B cell (primary cell): ENCODE measurements at regions of chr13 and their contacts with region 1.

Region 1: GRCh38 chr13:30408319-30409101 is 13.8 kb upstream of the UBE2L5 start:
- DNase-seq: peak; percentile 94
- ATAC-seq: peak; percentile 97
- H3K4me3 ChIP-seq: peak overlapping the region; percentile 14 to 53 (median 48)
- H3K4me3 Mint-ChIP-seq: peak overlapping the region; percentile 73
- H3K27ac ChIP-seq: peak overlapping the region; percentile 56 to 67
- H3K27ac Mint-ChIP-seq: peak overlapping the region; percentile 85
- H3K4me1 ChIP-seq: peaks cover 25 to 40% of the 10 kb centered on the region in 2 donors
- H3K4me1 Mint-ChIP-seq: peaks cover 49% of the 10 kb centered on the region
- H3K27me3 ChIP-seq: no peaks in the 10 kb centered on the region
- H3K27me3 Mint-ChIP-seq: no peaks in the 10 kb centered on the region
- CTCF ChIP-seq: peak; percentile 72

Region 2: GRCh38 chr13:30061217-30061616 is 347.3 kb before region 1 on chr13:
- CTCF ChIA-PET with region 1: no interaction called
- POLR2A ChIA-PET with region 1: no interaction called
- intact Hi-C with region 1: no loop called
- DNase-seq: no peak
- ATAC-seq: no peak
- H3K4me3 ChIP-seq: no peak overlapping the region
- H3K4me3 Mint-ChIP-seq: no peak overlapping the region
- H3K27ac ChIP-seq: no peak overlapping the region
- H3K27ac Mint-ChIP-seq: no peak overlapping the region
- H3K4me1 ChIP-seq: no peaks in the 10 kb centered on the region
- H3K4me1 Mint-ChIP-seq: no peaks in the 10 kb centered on the region
- H3K27me3 ChIP-seq: peaks cover 0 to 4% (median 0%) of the 10 kb centered on the region in 4 experiments
- H3K27me3 Mint-ChIP-seq: peaks cover 27% of the 10 kb centered on the region
- CTCF ChIP-seq: no peak

Region 3: GRCh38 chr13:30306762-30307193 is 101.7 kb before region 1 on chr13:
- CTCF ChIA-PET with region 1: interaction called, 3 read pairs
- POLR2A ChIA-PET with region 1: interaction called, 3 read pairs
- intact Hi-C with region 1: loop called (anchors 1 kb)
- DNase-seq: peak; percentile 96
- ATAC-seq: peak; percentile 89
- H3K4me3 ChIP-seq: peak overlapping the region; percentile 70 to 97 (median 83)
- H3K4me3 Mint-ChIP-seq: peak overlapping the region; percentile 85
- H3K27ac ChIP-seq: peak overlapping the region; percentile 71 to 87
- H3K27ac Mint-ChIP-seq: peak overlapping the region; percentile 86
- H3K4me1 ChIP-seq: peaks cover 28 to 45% of the 10 kb centered on the region in 2 donors
- H3K4me1 Mint-ChIP-seq: peaks cover 55% of the 10 kb centered on the region
- H3K27me3 ChIP-seq: no peaks in the 10 kb centered on the region
- H3K27me3 Mint-ChIP-seq: no peaks in the 10 kb centered on the region
- CTCF ChIP-seq: no peak

Region 4: DNA sequence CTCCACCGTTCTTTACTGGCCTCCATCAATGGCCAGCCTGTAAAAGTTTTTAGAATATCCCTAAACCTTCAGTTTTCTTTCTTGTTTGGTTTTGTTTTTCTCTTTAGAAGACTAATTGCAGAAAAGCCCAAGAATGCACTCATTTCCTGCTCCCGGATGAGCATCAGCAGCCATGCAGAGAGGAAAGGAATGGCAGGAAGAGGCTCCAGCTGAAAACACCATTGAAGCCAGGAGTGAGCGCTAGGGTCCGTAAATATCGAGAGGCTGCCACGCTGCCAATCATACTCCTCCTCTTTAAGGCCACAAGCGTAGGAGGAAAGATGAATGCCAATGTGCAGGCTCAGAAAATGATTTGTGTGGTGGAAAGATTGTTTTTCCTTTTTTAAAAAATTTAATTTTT is 43.6 kb before region 1 on chr13:
- CTCF ChIA-PET with region 1: interaction called, 93 read pairs
- POLR2A ChIA-PET with region 1: interaction called, 4 read pairs
- intact Hi-C with region 1: no loop called
- DNase-seq: no peak
- ATAC-seq: no peak
- H3K4me3 ChIP-seq: no peak overlapping the region
- H3K4me3 Mint-ChIP-seq: no peak overlapping the region
- H3K27ac ChIP-seq: no peak overlapping the region
- H3K27ac Mint-ChIP-seq: no peak overlapping the region
- H3K4me1 ChIP-seq: peaks cover 34 to 40% of the 10 kb centered on the region in 2 donors
- H3K4me1 Mint-ChIP-seq: peaks cover 39% of the 10 kb centered on the region
- H3K27me3 ChIP-seq: no peaks in the 10 kb centered on the region
- H3K27me3 Mint-ChIP-seq: no peaks in the 10 kb centered on the region
- CTCF ChIP-seq: no peak

Region 5: GRCh38 chr13:30395192-30396084 is 13.1 kb before region 1 on chr13:
- CTCF ChIA-PET with region 1: interaction called, 28 read pairs
- POLR2A ChIA-PET with region 1: interaction called, 14 read pairs
- intact Hi-C with region 1: loop called (anchors 1 kb)
- DNase-seq: peak; percentile 86
- ATAC-seq: peak; percentile 79
- H3K4me3 ChIP-seq: peak overlapping the region; percentile 62 to 96 (median 77)
- H3K4me3 Mint-ChIP-seq: peak overlapping the region; percentile 98
- H3K27ac ChIP-seq: peak overlapping the region; percentile 92
- H3K27ac Mint-ChIP-seq: peak overlapping the region; percentile 99
- H3K4me1 ChIP-seq: peaks cover 10 to 15% of the 10 kb centered on the region in 2 donors
- H3K4me1 Mint-ChIP-seq: peaks cover 24% of the 10 kb centered on the region
- H3K27me3 ChIP-seq: no peaks in the 10 kb centered on the region
- H3K27me3 Mint-ChIP-seq: no peaks in the 10 kb centered on the region
- CTCF ChIP-seq: no peak

Region 6: DNA sequence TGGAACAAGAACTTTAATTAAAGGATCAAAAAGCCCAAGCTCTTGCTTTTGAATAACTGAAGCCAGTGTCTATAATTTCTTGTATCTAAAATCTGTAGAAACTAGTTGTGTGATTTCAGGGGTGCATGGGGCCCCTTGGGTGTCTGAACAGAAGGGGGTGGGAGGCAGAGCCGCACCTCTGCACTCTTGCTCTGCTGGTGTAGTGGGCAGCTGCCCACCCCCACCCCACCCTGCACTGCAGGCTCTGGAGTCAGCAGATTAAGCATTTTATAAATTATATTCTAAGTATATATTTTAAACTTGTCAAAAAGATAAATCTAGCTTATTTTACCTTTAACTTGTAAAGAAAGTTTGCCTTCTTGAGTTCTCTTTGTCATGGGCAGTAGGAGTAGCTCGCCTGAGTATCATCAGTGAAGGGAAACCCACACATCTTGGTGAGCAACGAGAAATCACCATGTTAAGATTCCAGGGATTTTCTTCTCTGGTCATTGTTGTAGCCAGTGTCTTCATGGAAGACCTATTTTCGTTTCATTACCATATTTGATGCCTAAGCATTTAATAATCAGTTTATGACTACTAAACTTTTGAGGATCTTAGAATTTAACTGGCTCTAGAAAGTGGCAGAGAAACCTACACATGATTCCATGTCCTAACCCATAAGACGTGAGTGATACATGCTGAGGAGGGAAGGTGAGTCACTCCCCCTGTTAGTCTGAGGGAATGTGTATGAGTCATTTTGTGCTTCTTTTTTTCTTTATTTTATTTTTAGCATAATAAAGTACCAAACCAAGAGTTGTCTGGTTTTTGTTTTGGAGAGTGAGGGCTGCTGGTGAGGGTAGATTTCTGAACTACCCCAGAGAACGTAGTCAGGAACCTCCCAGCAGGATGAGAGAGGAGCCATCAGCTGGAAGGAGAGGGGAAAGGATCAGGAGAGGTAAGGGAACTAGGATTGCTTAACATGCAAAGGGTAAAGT is 21.5 kb after region 1 on chr13:
- CTCF ChIA-PET with region 1: interaction called, 6 read pairs
- POLR2A ChIA-PET with region 1: interaction called, 10 read pairs
- intact Hi-C with region 1: no loop called
- DNase-seq: no peak
- ATAC-seq: peak; percentile 76
- H3K4me3 ChIP-seq: no peak overlapping the region
- H3K4me3 Mint-ChIP-seq: peak overlapping the region; percentile 72
- H3K27ac ChIP-seq: no peak overlapping the region
- H3K27ac Mint-ChIP-seq: peak overlapping the region; percentile 75
- H3K4me1 ChIP-seq: peaks cover 21 to 30% of the 10 kb centered on the region in 2 donors
- H3K4me1 Mint-ChIP-seq: peaks cover 30% of the 10 kb centered on the region
- H3K27me3 ChIP-seq: no peaks in the 10 kb centered on the region
- H3K27me3 Mint-ChIP-seq: no peaks in the 10 kb centered on the region
- CTCF ChIP-seq: no peak

Region 7: GRCh38 chr13:30453727-30454126 is 45.2 kb after region 1 on chr13:
- CTCF ChIA-PET with region 1: interaction called, 10 read pairs
- POLR2A ChIA-PET with region 1: interaction called, 4 read pairs
- intact Hi-C with region 1: loop called (anchors 2 kb)
- DNase-seq: peak; percentile 43
- ATAC-seq: peak; percentile 36
- H3K4me3 ChIP-seq: no peak overlapping the region
- H3K4me3 Mint-ChIP-seq: no peak overlapping the region
- H3K27ac ChIP-seq: no peak overlapping the region
- H3K27ac Mint-ChIP-seq: no peak overlapping the region
- H3K4me1 ChIP-seq: peaks cover 8 to 10% of the 10 kb centered on the region in 2 donors
- H3K4me1 Mint-ChIP-seq: peaks cover 35% of the 10 kb centered on the region
- H3K27me3 ChIP-seq: no peaks in the 10 kb centered on the region
- H3K27me3 Mint-ChIP-seq: no peaks in the 10 kb centered on the region
- CTCF ChIP-seq: peak; percentile 28

Region 8: DNA sequence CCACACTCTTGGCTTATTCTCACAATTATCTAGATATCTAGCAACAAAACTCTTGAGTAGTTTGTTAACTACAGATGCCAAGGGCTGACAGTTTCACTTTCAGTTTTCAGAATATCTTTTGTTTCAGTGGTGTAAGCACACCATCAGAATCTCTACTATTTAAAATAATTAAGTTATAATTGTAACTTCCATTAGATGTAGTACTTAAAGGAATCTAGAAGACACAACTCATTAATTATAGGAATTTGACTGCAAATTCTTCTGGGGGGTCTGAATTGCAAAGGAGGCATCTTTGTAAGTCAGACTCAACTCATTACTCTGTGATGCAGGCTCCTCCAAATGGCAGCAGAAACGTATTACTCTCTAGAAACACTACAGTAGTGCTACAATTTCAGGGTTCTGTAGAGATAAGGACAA is 164.4 kb after region 1 on chr13:
- CTCF ChIA-PET with region 1: no interaction called
- POLR2A ChIA-PET with region 1: no interaction called
- intact Hi-C with region 1: loop called (anchors 5 kb)
- DNase-seq: peak; percentile 64
- ATAC-seq: peak; percentile 77
- H3K4me3 ChIP-seq: peak overlapping the region in 4 of 5 experiments; percentile 27 to 65 (median 35)
- H3K4me3 Mint-ChIP-seq: peak overlapping the region; percentile 75
- H3K27ac ChIP-seq: peak overlapping the region; percentile 55 to 81
- H3K27ac Mint-ChIP-seq: peak overlapping the region; percentile 68
- H3K4me1 ChIP-seq: peaks cover 5 to 8% of the 10 kb centered on the region in 2 donors
- H3K4me1 Mint-ChIP-seq: peaks cover 26% of the 10 kb centered on the region
- H3K27me3 ChIP-seq: peaks cover 0 to 3% (median 0%) of the 10 kb centered on the region in 4 experiments
- H3K27me3 Mint-ChIP-seq: no peaks in the 10 kb centered on the region
- CTCF ChIP-seq: peak; percentile 28

Region 9: GRCh38 chr13:30659980-30660379 is 251.5 kb after region 1 on chr13:
- CTCF ChIA-PET with region 1: no interaction called
- POLR2A ChIA-PET with region 1: no interaction called
- intact Hi-C with region 1: no loop called
- DNase-seq: no peak
- ATAC-seq: no peak
- H3K4me3 ChIP-seq: peak overlapping the region in 4 of 5 experiments; percentile 14 to 50 (median 34)
- H3K4me3 Mint-ChIP-seq: peak overlapping the region; percentile 83
- H3K27ac ChIP-seq: peak overlapping the region; percentile 78 to 83
- H3K27ac Mint-ChIP-seq: peak overlapping the region; percentile 97
- H3K4me1 ChIP-seq: peaks cover 56 to 60% of the 10 kb centered on the region in 2 donors
- H3K4me1 Mint-ChIP-seq: peaks cover 24% of the 10 kb centered on the region
- H3K27me3 ChIP-seq: no peaks in the 10 kb centered on the region
- H3K27me3 Mint-ChIP-seq: no peaks in the 10 kb centered on the region
- CTCF ChIP-seq: no peak